ENCODE measurements at regions of chr1 and their contacts with region 1.

Region 1: DNA sequence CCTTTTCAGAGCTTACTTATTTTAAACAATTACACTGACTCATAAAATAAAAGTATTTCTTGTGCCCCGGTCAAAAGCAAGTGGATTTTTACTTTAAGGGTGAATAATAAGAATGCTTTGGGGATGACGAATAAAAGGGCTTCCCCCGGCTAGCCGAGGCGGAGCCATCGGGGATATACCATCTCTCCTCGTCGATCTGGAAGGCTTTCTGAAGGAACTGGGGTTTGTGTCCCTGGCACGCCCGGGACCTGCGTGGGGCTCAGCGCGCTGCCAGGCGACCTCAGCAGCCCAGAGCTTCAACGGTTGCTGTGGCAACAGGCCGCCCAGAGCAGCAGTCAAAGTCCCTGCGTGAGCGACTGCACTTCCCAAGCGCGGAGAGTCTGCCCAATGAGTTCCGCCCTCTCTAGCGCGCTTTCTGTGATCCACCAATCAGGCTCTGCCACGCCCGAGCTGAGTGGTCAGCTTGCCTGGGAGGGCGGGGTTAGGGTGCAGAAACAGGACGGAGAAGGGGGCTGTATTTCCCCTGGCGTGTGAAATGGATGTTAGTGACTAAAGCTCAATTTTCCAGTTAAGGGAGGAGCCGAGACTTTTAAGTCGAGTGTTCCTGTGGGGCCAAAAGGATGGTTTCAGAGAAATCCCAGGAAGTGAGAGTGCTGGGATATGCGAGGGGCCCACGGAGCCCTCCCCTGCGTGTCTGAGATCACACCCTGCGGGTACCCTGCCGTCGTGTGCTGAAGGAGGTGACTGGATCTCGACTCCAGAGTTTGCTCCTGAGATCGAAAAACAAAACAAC is 33.0 kb upstream of the MGST3 start:
- DNase-seq: peak; percentile 93
- H3K4me3 Mint-ChIP-seq: peak overlapping the region; percentile 90
- H3K27ac Mint-ChIP-seq: peak overlapping the region; percentile 86
- H3K4me1 Mint-ChIP-seq: peaks cover 32% of the 10 kb centered on the region
- H3K27me3 Mint-ChIP-seq: peaks cover 30% of the 10 kb centered on the region

Region 2: GRCh38 chr1:165403835-165404482 is 194.1 kb before region 1 on chr1:
- intact Hi-C with region 1: loop called (anchors 1 kb)
- DNase-seq: peak; percentile 12
- H3K4me3 Mint-ChIP-seq: no peak overlapping the region
- H3K27ac Mint-ChIP-seq: no peak overlapping the region
- H3K4me1 Mint-ChIP-seq: no peaks in the 10 kb centered on the region
- H3K27me3 Mint-ChIP-seq: peaks cover 35% of the 10 kb centered on the region

Region 3: DNA sequence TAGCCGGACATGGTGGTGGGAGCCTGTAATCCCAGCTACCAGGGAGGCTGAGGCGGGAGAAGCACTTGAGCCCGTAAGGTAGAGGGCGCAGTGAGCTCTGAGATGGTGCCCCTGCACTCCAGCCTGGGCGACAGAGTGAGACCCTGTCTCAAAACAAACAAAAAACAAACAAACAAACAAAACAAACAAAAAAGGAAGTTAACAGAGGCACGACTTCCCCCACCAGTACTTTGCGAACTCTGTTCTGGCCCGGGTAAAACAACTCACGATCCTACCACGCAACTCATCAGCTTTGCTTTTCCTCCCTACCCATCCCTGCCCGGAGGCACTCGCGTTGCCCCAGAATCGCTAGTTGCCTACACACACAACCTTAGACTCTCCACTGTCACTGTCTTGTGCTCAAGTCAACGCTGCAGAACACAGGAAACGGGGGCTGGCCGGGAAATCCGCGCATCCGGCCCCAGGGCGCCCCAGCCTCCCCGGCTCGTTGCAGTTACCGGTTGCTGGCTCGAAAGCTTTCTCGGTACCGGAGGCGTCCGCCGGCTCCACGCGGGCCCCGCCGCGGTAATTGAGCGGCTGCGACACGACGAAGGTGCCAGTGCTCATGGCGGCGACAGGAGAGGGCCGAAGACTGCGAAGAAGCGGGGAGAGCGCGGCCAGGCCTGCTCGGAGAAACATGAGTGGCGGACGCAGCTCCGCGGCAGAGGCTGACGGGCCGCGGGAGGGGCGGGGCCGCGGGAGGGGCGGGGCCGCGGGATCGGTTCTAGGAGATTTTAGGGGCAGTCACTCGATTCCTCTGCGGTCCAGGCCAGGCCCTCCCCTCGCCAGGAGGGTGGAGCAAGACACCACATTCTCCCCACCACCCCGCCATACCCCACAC is 100.0 kb after region 1 on chr1 and contains the start of gene ALDH9A1:
- intact Hi-C with region 1: loop called (anchors 1 kb)
- DNase-seq: peak; percentile 84
- H3K4me3 Mint-ChIP-seq: peak within 1 kb of the TSS; percentile 100
- H3K27ac Mint-ChIP-seq: peak within 1 kb of the TSS; percentile 99
- H3K4me1 Mint-ChIP-seq: peaks cover 18% of the 10 kb centered on the region
- H3K27me3 Mint-ChIP-seq: peaks cover 3% of the 10 kb centered on the region
- total RNA-seq, gene ALDH9A1: 43.3 and 47.4 TPM in 2 replicates

Region 4: GRCh38 chr1:165827268-165828102 is 229.4 kb after region 1 on chr1 and contains the start of gene UCK2:
- intact Hi-C with region 1: loop called (anchors 5 kb)
- DNase-seq: peak; percentile 59
- H3K4me3 Mint-ChIP-seq: peak within 1 kb of the TSS; percentile 89
- H3K27ac Mint-ChIP-seq: peak within 1 kb of the TSS; percentile 81
- H3K4me1 Mint-ChIP-seq: peaks cover 25% of the 10 kb centered on the region
- H3K27me3 Mint-ChIP-seq: peaks cover 8% of the 10 kb centered on the region
- total RNA-seq, gene UCK2: 94.3 and 100 TPM in 2 replicates

Region 5: DNA sequence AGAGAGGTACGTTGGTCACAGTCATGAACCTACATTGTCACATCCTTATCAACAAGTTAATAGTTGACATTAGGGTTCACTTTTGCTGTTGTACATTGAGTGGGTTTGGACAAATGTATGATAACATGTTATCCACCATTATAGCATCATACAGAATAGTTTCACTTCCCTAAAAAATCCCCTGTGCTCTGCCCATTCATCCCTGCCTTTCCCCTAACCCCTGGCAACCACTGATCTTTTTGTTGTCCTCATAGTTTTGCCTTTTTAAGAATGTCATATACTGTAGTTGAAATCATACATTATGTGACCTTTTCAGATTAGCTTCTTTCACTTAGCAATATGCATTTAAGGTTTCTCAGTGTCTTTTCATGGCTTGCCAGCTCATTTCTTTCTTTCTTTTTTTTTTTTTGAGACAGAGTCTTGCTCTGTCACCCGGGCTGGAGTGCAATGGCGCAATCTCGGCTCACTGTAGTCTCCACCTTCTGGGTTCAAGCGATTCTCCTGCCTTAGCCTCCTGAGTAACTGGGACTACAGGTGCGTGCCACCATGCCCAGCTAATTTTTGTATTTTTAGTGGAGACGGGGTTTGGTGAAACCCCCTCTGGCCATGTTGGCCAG is 280.0 kb after region 1 on chr1:
- intact Hi-C with region 1: no loop called
- DNase-seq: no peak
- H3K4me3 Mint-ChIP-seq: no peak overlapping the region
- H3K27ac Mint-ChIP-seq: peak overlapping the region; percentile 56
- H3K4me1 Mint-ChIP-seq: peaks cover 71% of the 10 kb centered on the region
- H3K27me3 Mint-ChIP-seq: no peaks in the 10 kb centered on the region

Region 6: DNA sequence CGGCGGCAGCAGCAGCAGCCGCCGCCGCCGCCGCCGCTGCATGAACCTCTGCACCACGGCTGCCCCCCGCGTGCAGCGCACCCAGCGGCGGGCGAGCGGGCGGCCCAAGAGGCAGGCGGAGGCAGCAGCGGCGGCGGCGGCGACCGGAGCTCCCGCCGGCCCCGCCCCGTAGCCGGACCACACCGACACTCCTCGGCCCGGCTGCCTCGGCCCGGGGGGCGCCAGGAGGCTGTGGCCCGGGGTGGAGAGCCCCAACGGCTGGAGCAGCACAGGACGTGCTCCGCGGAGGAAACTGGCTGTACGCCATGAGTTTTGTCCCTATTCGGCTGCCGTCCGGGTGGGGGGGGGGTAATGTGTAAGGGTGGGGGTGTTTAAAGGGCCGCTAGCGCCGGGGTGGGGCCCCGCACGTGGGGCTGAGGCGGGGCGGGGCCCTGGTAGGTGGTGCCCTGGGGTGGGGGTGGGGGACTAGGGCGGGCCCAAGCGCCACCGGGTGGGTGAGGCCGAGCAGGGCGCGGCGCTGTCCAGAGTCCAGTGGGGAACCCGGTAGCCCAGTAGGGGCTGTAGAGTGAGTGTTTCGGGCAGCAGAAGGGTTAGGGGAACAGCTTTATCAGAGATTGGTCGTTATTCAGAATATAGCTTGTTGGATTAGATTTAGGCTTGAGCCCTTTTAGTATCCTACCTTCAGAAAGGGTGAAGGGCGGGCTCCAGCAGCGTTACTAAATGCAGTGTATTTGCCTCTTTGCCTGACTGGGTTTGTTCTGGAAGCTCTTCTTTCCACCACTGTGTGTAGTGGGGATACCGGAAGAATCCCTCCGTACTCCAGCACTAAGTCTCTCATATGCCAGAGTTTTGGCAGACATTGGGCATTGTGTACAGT is 568.9 kb after region 1 on chr1 and contains the start of gene FAM78B:
- intact Hi-C with region 1: loop called (anchors 10 kb)
- DNase-seq: peak; percentile 52
- H3K4me3 Mint-ChIP-seq: peak within 1 kb of the TSS; percentile 82
- H3K27ac Mint-ChIP-seq: peak within 1 kb of the TSS; percentile 53
- H3K4me1 Mint-ChIP-seq: peaks cover 32% of the 10 kb centered on the region
- H3K27me3 Mint-ChIP-seq: peaks cover 47% of the 10 kb centered on the region
- total RNA-seq, gene FAM78B: 1.2 and 1.4 TPM in 2 replicates